ENCODE measurements at regions of chr3 and their contacts with region 1.

Region 1: GRCh38 chr3:109825971-109826810 is 488.8 kb upstream of the DPPA4 start:
- DNase-seq: no peak
- H3K4me3 ChIP-seq: no peak overlapping the region
- H3K27ac ChIP-seq: no peak overlapping the region
- H3K4me1 ChIP-seq: no peaks in the 10 kb centered on the region
- H3K27me3 ChIP-seq: no peaks in the 10 kb centered on the region
- CTCF ChIP-seq: no peak

Region 2: DNA sequence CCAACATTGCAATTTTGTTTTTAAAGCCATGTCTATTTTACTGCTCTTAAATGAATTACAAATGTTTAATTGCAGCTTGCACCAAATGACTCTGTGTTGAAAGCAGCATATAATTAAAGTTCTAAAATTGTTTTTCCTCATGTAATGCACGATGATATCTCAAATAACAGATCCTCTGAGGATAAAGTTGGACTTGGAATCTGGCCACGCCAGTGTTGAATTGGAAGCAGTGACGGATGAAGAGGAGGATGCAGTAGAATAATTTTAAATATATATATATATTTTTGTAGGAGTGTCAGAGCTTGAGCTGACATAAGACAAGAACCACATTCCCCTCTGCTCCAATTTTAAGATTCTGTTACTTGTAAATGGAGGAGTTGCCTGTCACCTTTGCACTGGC is 82.2 kb before region 1 on chr3:
- CTCF ChIA-PET with region 1: no interaction called
- dilution Hi-C with region 1: loop called (anchors 5 kb)
- in situ Hi-C with region 1: no loop called
- intact Hi-C with region 1: no loop called
- DNase-seq: no peak
- H3K4me3 ChIP-seq: no peak overlapping the region
- H3K27ac ChIP-seq: no peak overlapping the region
- H3K4me1 ChIP-seq: no peaks in the 10 kb centered on the region
- H3K27me3 ChIP-seq: no peaks in the 10 kb centered on the region
- CTCF ChIP-seq: no peak